B cell (primary cell): ENCODE measurements at regions of chr11 and their contacts with region 1.

Region 1: GRCh38 chr11:9460322-9461067 is at the start of gene ZNF143:
- DNase-seq: peak; percentile 100
- ATAC-seq: peak; percentile 82
- H3K4me3 ChIP-seq: peak within 1 kb of the TSS; percentile 87 to 98 (median 93)
- H3K4me3 Mint-ChIP-seq: peak within 1 kb of the TSS; percentile 97
- H3K27ac ChIP-seq: peak within 1 kb of the TSS; percentile 95 to 99
- H3K27ac Mint-ChIP-seq: peak within 1 kb of the TSS; percentile 98
- H3K4me1 ChIP-seq: peaks cover 19 to 26% of the 10 kb centered on the region in 2 donors
- H3K4me1 Mint-ChIP-seq: peaks cover 26% of the 10 kb centered on the region
- H3K27me3 ChIP-seq: no peaks in the 10 kb centered on the region
- H3K27me3 Mint-ChIP-seq: no peaks in the 10 kb centered on the region
- CTCF ChIP-seq: no peak
- total RNA-seq, gene ZNF143: 54.9 and 56.5 TPM in 2 replicates

Region 2: DNA sequence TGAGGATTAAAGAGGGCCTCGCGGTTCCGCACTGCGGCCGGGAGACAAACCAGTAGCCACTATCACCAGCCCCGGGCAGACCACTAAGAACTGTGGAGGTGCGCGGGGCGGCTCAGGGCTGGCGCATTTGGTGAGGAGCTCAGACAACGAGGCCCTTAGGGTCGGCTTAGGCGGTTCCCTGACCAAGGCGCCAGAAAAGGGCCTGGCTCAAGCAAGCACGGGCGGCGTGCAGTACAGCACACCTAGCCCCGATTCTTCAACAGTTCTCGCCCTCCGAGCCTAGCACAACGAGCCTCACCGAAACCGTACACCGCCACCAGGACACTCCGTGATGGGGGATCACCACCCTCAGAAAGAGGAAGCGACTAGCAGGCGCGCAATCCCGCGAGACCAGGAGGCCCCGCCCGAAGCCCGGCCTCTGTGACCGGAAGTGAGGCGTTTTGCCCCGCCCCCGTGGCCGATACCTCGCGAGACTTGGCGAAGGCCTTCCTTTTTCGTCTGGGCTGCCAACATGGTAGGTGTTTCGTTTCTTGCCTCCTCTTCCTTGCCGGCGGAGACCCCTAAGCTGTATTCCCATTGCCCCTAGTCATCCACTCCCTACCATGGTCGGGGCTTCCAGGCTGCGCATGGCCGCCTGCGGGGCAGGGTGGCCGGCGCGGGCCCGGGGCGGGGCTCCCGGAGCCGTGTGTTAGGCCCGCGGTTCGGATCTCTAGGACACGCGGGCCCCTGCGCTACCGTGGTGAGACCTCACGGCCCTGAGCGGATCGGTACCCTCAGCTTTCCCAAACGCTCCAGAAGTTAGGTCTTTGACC is 778.0 kb before region 1 on chr11 and contains the starts of genes RPL27A and TRIM66:
- CTCF ChIA-PET with region 1: no interaction called
- POLR2A ChIA-PET with region 1: no interaction called
- intact Hi-C with region 1: loop called (anchors 2 kb)
- DNase-seq: peak; percentile 98
- ATAC-seq: peak; percentile 93
- H3K4me3 ChIP-seq: peak within 1 kb of the TSS; percentile 82 to 99 (median 88)
- H3K4me3 Mint-ChIP-seq: peak within 1 kb of the TSS; percentile 94
- H3K27ac ChIP-seq: peak within 1 kb of the TSS; percentile 87 to 98
- H3K27ac Mint-ChIP-seq: peak within 1 kb of the TSS; percentile 97
- H3K4me1 ChIP-seq: peaks cover 25 to 26% of the 10 kb centered on the region in 2 donors
- H3K4me1 Mint-ChIP-seq: peaks cover 41% of the 10 kb centered on the region
- H3K27me3 ChIP-seq: no peaks in the 10 kb centered on the region
- H3K27me3 Mint-ChIP-seq: no peaks in the 10 kb centered on the region
- CTCF ChIP-seq: peak; percentile 18
- total RNA-seq, gene RPL27A: 1,369 and 1,473 TPM in 2 replicates
- total RNA-seq, gene TRIM66: 21.1 and 21.4 TPM in 2 replicates

Region 3: DNA sequence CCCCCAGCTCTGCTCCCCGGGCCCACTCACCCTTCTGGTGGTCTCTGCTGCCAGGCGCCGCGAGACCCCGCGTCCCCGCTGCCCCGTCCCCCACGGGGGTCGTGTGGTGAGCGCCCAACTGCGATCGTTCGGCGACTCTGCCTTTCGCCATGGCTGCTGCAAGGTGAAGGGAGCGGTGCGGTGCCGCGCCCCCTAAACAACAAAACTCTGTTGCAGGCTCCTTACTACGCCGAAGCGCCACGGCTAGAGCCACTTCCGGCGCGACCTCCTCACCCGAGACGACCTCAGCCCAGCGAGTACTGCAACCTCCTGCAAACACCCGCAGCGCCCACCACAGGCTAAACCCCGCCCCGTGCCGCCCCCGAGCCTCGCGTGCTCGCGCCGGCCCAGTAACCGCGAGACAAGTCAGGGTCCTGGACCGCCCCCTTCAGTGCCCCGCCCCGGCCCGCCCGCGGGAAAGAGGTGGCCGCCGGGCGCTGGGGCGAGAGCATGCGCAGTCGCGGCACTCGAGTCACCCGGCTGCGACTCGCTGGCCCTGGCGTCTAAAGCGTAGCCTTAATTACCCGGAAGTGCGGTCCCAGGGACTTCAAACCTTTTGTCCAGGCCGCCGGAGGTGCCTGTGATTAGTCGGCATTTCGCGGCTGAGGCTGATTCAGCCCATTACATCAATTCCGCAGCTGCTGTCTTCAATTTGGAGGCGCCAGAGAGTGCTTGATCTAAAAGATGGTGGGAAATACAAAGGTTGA is 146.0 kb before region 1 on chr11 and contains the start of gene TMEM41B:
- CTCF ChIA-PET with region 1: no interaction called
- POLR2A ChIA-PET with region 1: interaction called, 10 read pairs
- intact Hi-C with region 1: loop called (anchors 1 kb)
- DNase-seq: peak; percentile 98
- ATAC-seq: peak; percentile 97
- H3K4me3 ChIP-seq: peak within 1 kb of the TSS; percentile 81 to 94 (median 86)
- H3K4me3 Mint-ChIP-seq: peak within 1 kb of the TSS; percentile 100
- H3K27ac ChIP-seq: peak within 1 kb of the TSS; percentile 82 to 92
- H3K27ac Mint-ChIP-seq: peak within 1 kb of the TSS; percentile 99
- H3K4me1 ChIP-seq: peaks cover 14 to 17% of the 10 kb centered on the region in 2 donors
- H3K4me1 Mint-ChIP-seq: peaks cover 43% of the 10 kb centered on the region
- H3K27me3 ChIP-seq: no peaks in the 10 kb centered on the region
- H3K27me3 Mint-ChIP-seq: peaks cover 1% of the 10 kb centered on the region
- CTCF ChIP-seq: no peak
- total RNA-seq, gene TMEM41B: 38.5 and 43.9 TPM in 2 replicates

Region 4: GRCh38 chr11:9573052-9573774 is 112.7 kb after region 1 on chr11 and contains the start of gene WEE1:
- CTCF ChIA-PET with region 1: interaction called, 4 read pairs
- POLR2A ChIA-PET with region 1: interaction called, 11 read pairs
- intact Hi-C with region 1: loop called (anchors 1 kb)
- DNase-seq: peak; percentile 97
- ATAC-seq: peak; percentile 87
- H3K4me3 ChIP-seq: peak within 1 kb of the TSS; percentile 52 to 96 (median 90)
- H3K4me3 Mint-ChIP-seq: peak within 1 kb of the TSS; percentile 97
- H3K27ac ChIP-seq: peak within 1 kb of the TSS; percentile 83 to 89
- H3K27ac Mint-ChIP-seq: peak within 1 kb of the TSS; percentile 94
- H3K4me1 ChIP-seq: peaks cover 51 to 55% of the 10 kb centered on the region in 2 donors
- H3K4me1 Mint-ChIP-seq: peaks cover 64% of the 10 kb centered on the region
- H3K27me3 ChIP-seq: no peaks in the 10 kb centered on the region
- H3K27me3 Mint-ChIP-seq: no peaks in the 10 kb centered on the region
- CTCF ChIP-seq: no peak
- total RNA-seq, gene WEE1: 31.2 and 31.3 TPM in 2 replicates

Region 5: DNA sequence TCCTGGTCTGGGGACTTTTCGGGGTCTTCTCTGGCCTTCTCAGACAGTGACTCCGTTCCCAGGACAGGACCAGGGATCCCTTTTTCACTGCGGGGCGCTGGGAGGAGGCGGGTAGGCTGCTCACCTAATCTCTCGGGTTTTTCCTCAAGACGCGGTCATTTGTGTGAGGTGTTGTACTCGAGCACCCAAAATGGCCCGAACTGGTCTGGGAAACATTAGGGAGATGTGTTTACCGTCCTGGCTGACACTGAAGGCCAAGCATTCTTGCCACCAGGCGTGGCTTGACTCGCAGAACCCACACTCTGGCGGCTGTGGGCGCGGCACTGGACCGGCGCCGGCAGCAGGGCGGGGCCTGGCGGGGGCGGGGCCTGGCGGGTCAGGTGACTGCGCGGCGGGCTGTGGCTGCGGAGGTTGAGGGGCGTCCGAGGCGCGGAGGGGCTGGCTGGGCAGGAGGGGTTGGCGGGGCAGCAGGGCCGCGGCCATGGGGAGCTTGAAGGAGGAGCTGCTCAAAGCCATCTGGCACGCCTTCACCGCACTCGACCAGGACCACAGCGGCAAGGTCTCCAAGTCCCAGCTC is 203.3 kb after region 1 on chr11 and contains the start of gene SWAP70:
- CTCF ChIA-PET with region 1: no interaction called
- POLR2A ChIA-PET with region 1: no interaction called
- intact Hi-C with region 1: loop called (anchors 2 kb)
- DNase-seq: peak; percentile 93
- ATAC-seq: peak; percentile 85
- H3K4me3 ChIP-seq: peak within 1 kb of the TSS; percentile 83 to 100 (median 94)
- H3K4me3 Mint-ChIP-seq: peak within 1 kb of the TSS; percentile 94
- H3K27ac ChIP-seq: peak within 1 kb of the TSS; percentile 84 to 95
- H3K27ac Mint-ChIP-seq: peak within 1 kb of the TSS; percentile 88
- H3K4me1 ChIP-seq: peaks cover 47 to 50% of the 10 kb centered on the region in 2 donors
- H3K4me1 Mint-ChIP-seq: peaks cover 63% of the 10 kb centered on the region
- H3K27me3 ChIP-seq: no peaks in the 10 kb centered on the region
- H3K27me3 Mint-ChIP-seq: no peaks in the 10 kb centered on the region
- CTCF ChIP-seq: no peak
- total RNA-seq, gene SWAP70: 200 and 203 TPM in 2 replicates

Region 6: GRCh38 chr11:10455637-10456487 is 995.4 kb after region 1 on chr11:
- CTCF ChIA-PET with region 1: no interaction called
- POLR2A ChIA-PET with region 1: no interaction called
- intact Hi-C with region 1: loop called (anchors 2 kb)
- DNase-seq: peak; percentile 85
- ATAC-seq: peak; percentile 72
- H3K4me3 ChIP-seq: peak overlapping the region; percentile 52 to 69 (median 66)
- H3K4me3 Mint-ChIP-seq: peak overlapping the region; percentile 96
- H3K27ac ChIP-seq: peak overlapping the region; percentile 75 to 98
- H3K27ac Mint-ChIP-seq: peak overlapping the region; percentile 98
- H3K4me1 ChIP-seq: peaks cover 69 to 83% of the 10 kb centered on the region in 2 donors
- H3K4me1 Mint-ChIP-seq: peaks cover 81% of the 10 kb centered on the region
- H3K27me3 ChIP-seq: no peaks in the 10 kb centered on the region
- H3K27me3 Mint-ChIP-seq: no peaks in the 10 kb centered on the region
- CTCF ChIP-seq: no peak

Region 7: GRCh38 chr11:10808553-10809372 is 1348.3 kb after region 1 on chr11 and contains the start of gene EIF4G2:
- CTCF ChIA-PET with region 1: no interaction called
- POLR2A ChIA-PET with region 1: interaction called, 9 read pairs
- intact Hi-C with region 1: loop called (anchors 2 kb)
- DNase-seq: peak; percentile 99
- ATAC-seq: peak; percentile 89
- H3K4me3 ChIP-seq: peak within 1 kb of the TSS; percentile 89 to 97 (median 94)
- H3K4me3 Mint-ChIP-seq: peak within 1 kb of the TSS; percentile 99
- H3K27ac ChIP-seq: peak within 1 kb of the TSS; percentile 92 to 96
- H3K27ac Mint-ChIP-seq: peak within 1 kb of the TSS; percentile 99
- H3K4me1 ChIP-seq: peaks cover 24 to 26% of the 10 kb centered on the region in 2 donors
- H3K4me1 Mint-ChIP-seq: peaks cover 39% of the 10 kb centered on the region
- H3K27me3 ChIP-seq: no peaks in the 10 kb centered on the region
- H3K27me3 Mint-ChIP-seq: no peaks in the 10 kb centered on the region
- CTCF ChIP-seq: no peak
- total RNA-seq, gene EIF4G2: 530 and 592 TPM in 2 replicates